Vagina (tissue), 2 donors: ENCODE measurements at regions of chr14 and their contacts with region 1.

Region 1: DNA sequence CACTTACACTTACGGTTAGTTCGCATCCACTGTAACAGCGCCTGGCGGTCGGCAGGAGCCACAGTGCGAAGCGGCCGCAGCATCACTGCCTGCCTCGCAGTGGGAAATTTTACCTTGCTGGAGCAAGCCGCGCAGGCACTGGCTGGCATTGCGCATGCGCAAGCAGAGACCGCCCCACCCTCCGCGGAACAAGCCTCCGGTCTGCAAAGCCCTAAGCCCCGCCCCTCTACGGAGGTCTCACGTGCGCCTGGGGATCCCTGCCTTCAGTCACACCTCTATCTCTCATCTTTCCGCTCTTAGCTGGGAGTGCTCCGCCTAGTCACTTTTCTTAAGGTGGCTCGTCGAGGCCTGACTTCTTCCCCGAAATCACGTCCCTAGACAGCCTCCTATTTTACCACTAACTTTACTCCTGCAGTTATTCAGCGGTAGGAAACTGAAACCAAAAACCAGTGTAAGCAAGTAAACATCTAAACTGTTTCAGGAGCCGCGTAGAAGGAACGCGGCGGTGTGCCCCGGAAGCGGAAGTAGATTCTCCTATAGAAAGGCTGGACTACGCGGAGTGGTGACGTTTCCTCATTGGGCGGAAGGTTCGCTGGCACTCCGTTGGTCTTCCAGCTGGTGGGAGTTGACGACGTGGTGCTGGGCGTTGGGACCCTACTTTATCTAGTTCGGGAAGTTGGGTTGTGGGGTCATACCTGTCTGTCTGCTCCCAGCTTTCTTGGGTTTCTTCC is at the start of gene SRP54:
- DNase-seq: peak; percentile 99
- H3K4me3 ChIP-seq: peak within 1 kb of the TSS; percentile 63 to 98
- H3K27ac ChIP-seq: peak within 1 kb of the TSS; percentile 97
- H3K4me1 ChIP-seq: peaks cover 55% of the 10 kb centered on the region
- H3K27me3 ChIP-seq: no peaks in the 10 kb centered on the region
- CTCF ChIP-seq: peak in 1 of 3 experiments; percentile 27
- POLR2A ChIP-seq: peak in 1 of 2 donors; percentile 94
- total RNA-seq, gene SRP54: 37.6 TPM

Region 2: DNA sequence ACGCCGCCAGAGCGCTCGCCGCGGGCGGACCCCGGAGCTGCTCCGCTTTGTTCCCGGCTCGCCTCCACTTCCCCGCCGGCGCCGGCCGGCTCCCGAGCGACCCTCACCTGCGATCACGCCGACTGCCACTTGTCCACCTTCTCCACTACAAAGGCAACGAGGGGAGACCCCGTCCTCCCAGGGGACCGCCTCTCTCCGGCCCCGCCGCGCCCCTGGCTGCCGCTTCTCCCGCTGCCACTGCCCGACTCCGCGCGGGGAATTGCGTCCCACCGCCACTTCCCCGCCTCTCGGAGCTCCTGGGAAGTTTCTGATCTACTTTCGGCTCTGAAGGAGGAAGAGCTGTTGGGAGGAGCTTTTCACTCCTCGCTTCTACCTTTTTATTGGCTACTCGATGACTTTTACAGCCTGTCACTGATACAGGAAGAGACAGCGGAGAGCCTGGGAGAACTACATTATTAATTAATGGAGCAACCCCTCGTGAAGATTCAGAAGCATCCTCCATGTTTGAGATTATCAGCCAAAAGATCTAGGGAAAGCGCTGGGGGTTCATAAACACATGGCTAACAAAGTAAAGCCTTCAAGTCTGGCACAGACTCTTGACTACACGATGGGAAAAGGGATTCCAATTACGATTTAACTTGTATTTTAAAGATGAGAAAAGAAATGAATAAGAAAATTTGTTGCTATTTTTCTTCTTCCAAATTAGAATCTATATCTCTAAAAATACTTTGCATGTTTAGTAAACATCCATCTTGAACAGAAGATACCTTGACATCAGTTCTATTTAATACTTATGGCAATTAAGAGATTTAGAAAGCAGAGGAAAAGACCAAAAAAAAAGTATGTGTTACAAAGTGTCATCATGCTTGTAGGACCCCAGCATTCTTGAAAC is 107.3 kb before region 1 on chr14 and contains the start of gene BAZ1A:
- intact Hi-C with region 1: loop called (anchors 2 kb)
- DNase-seq: peak in 1 of 2 donors; percentile 88
- H3K4me3 ChIP-seq: peak within 1 kb of the TSS; percentile 90 to 96
- H3K27ac ChIP-seq: peak within 1 kb of the TSS; percentile 100
- H3K4me1 ChIP-seq: peaks cover 19% of the 10 kb centered on the region
- H3K27me3 ChIP-seq: no peaks in the 10 kb centered on the region
- CTCF ChIP-seq: peak in 2 of 3 experiments; percentile 15 to 26
- POLR2A ChIP-seq: peak in 1 of 2 donors; percentile 90
- total RNA-seq, gene BAZ1A: 38.5 TPM

Region 3: DNA sequence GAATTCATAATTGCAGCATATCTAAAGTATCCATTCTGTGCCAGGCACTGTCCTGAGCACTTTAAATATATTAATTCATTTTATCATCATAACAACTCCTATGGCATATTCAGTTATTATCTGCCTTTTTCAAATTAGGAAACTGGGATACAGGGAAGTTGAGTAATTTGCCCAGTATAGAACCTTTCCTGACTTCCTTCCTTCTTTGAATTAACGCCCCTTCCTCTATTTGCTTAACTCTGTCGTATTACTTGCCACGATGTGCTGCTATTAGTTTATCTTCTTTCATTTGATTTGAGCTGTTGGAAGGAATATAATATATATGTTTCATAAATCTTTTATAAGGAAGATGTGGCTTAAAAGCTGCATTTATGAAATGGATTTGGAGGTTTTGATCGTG is 38.1 kb after region 1 on chr14:
- intact Hi-C with region 1: no loop called
- DNase-seq: no peak
- H3K4me3 ChIP-seq: no peak overlapping the region
- H3K27ac ChIP-seq: no peak overlapping the region
- H3K4me1 ChIP-seq: no peaks in the 10 kb centered on the region
- H3K27me3 ChIP-seq: no peaks in the 10 kb centered on the region
- CTCF ChIP-seq: no peak
- POLR2A ChIP-seq: no peak